A673 (cell line): ENCODE measurements at regions of chr4 and their contacts with region 1.

Region 1: DNA sequence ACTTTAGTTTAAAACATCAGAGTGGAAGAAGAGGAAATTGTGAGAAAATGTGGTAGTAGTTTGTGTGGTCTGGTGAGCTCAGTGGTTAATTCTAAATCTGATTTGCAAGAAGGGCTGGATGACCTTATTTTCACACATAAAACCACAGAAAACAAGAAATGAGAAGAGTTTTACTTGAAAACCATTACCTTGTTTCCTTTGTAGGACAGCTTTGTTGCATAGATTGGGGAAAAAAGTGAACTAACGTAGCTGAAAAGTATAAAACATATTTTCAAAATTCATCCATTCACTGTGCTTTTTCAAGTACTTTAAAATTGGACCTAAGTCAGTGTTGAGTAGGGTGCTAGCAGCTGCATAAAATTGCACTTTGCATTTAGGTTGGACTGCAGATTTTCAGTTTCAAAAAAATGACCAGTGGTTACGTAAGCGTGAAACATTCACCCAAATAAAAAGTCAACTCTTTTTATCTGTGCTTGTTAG is 211.3 kb downstream of the ARHGAP10 start:
- DNase-seq: no peak
- H3K4me3 ChIP-seq: no peak overlapping the region
- H3K27ac ChIP-seq: no peak overlapping the region
- H3K4me1 ChIP-seq: no peaks in the 10 kb centered on the region
- H3K27me3 ChIP-seq: no peaks in the 10 kb centered on the region
- CTCF ChIP-seq: no peak

Region 2: DNA sequence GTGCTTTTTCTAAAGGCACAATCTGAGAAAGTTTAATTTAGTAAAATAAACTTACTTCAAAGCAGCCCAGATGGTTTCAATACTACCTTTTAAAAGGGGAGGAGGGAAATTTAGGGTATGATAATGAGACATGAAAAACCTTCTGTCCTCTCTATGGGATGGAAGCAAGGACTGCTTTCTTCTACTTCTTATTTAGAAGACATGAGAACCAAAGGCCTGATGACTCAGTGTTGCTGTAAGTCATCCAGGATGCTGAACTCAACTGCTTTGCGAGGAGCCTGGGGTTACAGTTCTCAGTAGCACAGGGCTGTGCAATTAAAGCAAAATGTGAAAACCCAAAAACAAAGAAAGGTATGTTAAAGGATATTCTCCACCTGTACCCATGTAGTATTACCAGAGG is 603.1 kb before region 1 on chr4:
- CTCF ChIA-PET with region 1: no interaction called
- POLR2A ChIA-PET with region 1: no interaction called
- intact Hi-C with region 1: no loop called
- DNase-seq: peak; percentile 27
- H3K4me3 ChIP-seq: no peak overlapping the region
- H3K27ac ChIP-seq: no peak overlapping the region
- H3K4me1 ChIP-seq: peaks cover 18% of the 10 kb centered on the region
- H3K27me3 ChIP-seq: no peaks in the 10 kb centered on the region
- CTCF ChIP-seq: no peak

Region 3: DNA sequence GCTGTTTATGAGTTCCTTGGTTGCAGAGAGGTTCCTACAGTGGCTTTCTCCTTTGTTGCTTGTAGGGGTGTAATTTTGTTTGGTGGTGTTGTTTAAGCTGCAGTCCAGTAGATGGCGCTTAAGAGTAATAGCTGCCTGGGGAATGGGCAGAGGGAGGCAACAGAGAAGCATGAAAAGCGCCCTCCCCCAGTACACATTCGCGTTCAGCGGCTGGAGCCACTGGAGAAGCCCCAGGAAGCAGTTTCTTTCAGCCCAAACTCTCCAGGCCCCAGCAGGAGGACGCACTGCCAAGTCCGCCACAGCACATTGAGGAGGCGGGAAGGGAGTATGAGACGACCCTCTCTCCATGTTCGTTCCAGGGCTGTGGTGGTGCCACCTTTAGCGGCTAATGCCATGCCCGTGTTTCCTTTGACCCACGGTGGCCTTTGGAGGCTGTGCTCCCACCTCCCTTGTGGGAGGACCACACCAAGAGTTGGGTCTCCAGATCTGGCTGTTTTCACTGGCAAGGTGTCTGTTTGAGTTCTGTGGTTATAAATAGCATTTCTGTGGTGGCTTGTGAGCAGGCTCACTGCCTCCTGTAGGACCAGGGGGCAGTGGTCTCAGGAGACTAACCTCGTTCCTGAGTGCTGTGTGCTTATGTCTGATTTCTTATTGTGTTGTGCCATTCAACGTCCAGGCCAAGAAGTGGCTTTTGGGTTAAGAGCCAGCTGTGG is 41.0 kb after region 1 on chr4:
- CTCF ChIA-PET with region 1: interaction called, 10 read pairs
- POLR2A ChIA-PET with region 1: no interaction called
- intact Hi-C with region 1: no loop called
- DNase-seq: peak; percentile 87
- H3K4me3 ChIP-seq: no peak overlapping the region
- H3K27ac ChIP-seq: no peak overlapping the region
- H3K4me1 ChIP-seq: peaks cover 16% of the 10 kb centered on the region
- H3K27me3 ChIP-seq: no peaks in the 10 kb centered on the region
- CTCF ChIP-seq: peak; percentile 91

Region 4: DNA sequence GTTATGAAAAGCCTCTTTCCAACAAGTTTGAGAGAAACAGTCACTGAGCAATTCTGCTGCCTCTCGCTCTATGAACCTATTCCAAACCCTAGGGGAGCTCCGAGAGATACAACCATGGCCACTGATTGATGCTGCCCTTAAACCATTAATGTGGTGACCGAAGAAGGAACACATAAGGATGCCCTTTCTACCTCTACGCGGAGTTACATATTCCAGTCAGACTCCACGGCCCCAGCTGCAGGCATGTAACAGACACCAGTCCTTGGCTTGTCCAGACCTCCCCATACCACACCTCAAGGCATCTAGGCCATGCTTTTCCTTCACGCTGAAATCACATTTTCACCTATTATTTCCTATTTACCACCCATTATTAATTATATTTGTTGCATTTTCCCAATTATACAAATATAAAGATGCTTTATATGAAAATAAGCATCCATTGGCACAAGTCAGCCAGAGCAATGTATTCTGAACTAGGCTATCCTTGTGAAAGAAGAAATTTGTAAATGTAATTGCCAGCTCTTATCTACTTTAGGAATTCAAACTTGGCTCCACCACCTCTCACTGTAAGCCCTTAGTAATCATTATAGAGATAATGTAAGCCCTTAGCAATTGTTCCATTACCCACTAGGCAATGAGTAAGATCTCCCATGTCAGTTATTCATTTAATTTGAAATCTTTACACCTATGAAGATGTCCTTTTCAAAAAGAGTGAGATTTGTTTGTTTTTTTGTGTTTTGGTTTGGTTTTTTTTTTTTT is 160.6 kb after region 1 on chr4:
- CTCF ChIA-PET with region 1: no interaction called
- POLR2A ChIA-PET with region 1: no interaction called
- intact Hi-C with region 1: no loop called
- DNase-seq: no peak
- H3K4me3 ChIP-seq: no peak overlapping the region
- H3K27ac ChIP-seq: no peak overlapping the region
- H3K4me1 ChIP-seq: no peaks in the 10 kb centered on the region
- H3K27me3 ChIP-seq: no peaks in the 10 kb centered on the region
- CTCF ChIP-seq: no peak